HCT116 (cell line): ENCODE measurements at regions of chr4 and their contacts with region 1.

Region 1: GRCh38 chr4:55444827-55445226 is 49.1 kb downstream of the TMEM165 start:
- DNase-seq: peak; percentile 13
- ATAC-seq: peak; percentile 52; the same call in 1 of the 2 replicates
- H3K4me3 ChIP-seq: no peak overlapping the region
- H3K27ac ChIP-seq: no peak overlapping the region
- H3K4me1 ChIP-seq: 0 out of 4 replicates have a peak, but pooled peaks cover 0 to 2% of the 10 kb centered on the region in 2 experiments
- H3K27me3 ChIP-seq: no peaks in the 10 kb centered on the region
- CTCF ChIP-seq: peak in 2 of 3 experiments; percentile 41 to 47; a peak in 3 of 6 replicates
- POLR2A ChIP-seq: no peak
- RAD21 ChIP-seq: peak; percentile 77

Region 2: GRCh38 chr4:55635741-55636655 is 191.2 kb after region 1 on chr4 and contains the start of gene NMU:
- CTCF ChIA-PET with region 1: no interaction called
- POLR2A ChIA-PET with region 1: no interaction called
- RAD21 ChIA-PET with region 1: no interaction called
- intact Hi-C with region 1: loop called (anchors 5 kb)
- DNase-seq: peak; percentile 67
- ATAC-seq: peak; percentile 93
- H3K4me3 ChIP-seq: peak within 1 kb of the TSS; percentile 77 to 78
- H3K27ac ChIP-seq: peak within 1 kb of the TSS; percentile 58
- H3K4me1 ChIP-seq: peaks cover 22 to 34% of the 10 kb centered on the region in 2 experiments
- H3K27me3 ChIP-seq: no peaks in the 10 kb centered on the region
- CTCF ChIP-seq: 0 out of 6 replicates have a peak, but pooled peaks of 1 of the 3 experiments have one; percentile 6
- POLR2A ChIP-seq: peak; percentile 73
- RAD21 ChIP-seq: peak; percentile 64
- total RNA-seq, gene NMU: 81.1 TPM

Region 3: GRCh38 chr4:55736605-55737183 is 291.9 kb after region 1 on chr4:
- CTCF ChIA-PET with region 1: interaction called, 7 read pairs
- POLR2A ChIA-PET with region 1: no interaction called
- RAD21 ChIA-PET with region 1: no interaction called
- intact Hi-C with region 1: loop called (anchors 1 kb)
- DNase-seq: peak; percentile 23
- ATAC-seq: no peak
- H3K4me3 ChIP-seq: no peak overlapping the region
- H3K27ac ChIP-seq: no peak overlapping the region
- H3K4me1 ChIP-seq: peaks cover 5 to 18% of the 10 kb centered on the region in 2 experiments
- H3K27me3 ChIP-seq: no peaks in the 10 kb centered on the region
- CTCF ChIP-seq: peak; percentile 23 to 58 (median 54); a peak in 4 of 6 replicates
- POLR2A ChIP-seq: no peak
- RAD21 ChIP-seq: peak; percentile 79

Region 4: DNA sequence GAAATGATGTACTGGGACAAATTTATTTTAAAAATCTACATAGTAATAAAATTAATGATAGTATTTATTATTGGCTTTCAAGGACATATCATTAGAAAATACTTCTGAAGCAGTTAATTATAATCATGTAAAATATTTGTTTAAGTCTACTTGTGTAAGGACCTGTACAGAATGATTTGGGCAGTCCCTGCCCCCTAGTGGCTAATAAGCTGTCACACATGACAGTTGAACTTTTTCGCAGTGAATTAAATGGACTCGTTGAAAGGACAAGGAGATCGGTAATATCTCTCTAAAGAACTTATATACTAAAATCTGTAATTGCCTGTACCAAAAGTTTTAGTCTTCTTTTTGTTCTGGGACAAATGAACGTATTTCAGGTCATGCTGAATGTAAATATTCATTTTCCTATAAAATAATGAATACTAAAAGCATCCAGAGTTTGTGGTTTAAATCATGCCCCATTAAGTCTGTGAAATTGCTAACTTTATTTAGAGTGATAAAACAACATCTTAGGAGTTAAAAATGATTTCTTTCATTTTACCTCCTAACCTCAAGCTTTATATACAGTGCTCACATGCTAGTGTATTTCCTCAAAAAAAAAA is 422.2 kb after region 1 on chr4:
- CTCF ChIA-PET with region 1: interaction called, 4 read pairs
- POLR2A ChIA-PET with region 1: no interaction called
- RAD21 ChIA-PET with region 1: no interaction called
- intact Hi-C with region 1: loop called (anchors 10 kb)
- DNase-seq: peak; percentile 51
- ATAC-seq: peak; percentile 87
- H3K4me3 ChIP-seq: no peak overlapping the region
- H3K27ac ChIP-seq: peak overlapping the region; percentile 49; the same call in 1 of the 2 replicates
- H3K4me1 ChIP-seq: peaks cover 12 to 26% of the 10 kb centered on the region in 2 experiments
- H3K27me3 ChIP-seq: no peaks in the 10 kb centered on the region
- CTCF ChIP-seq: peak; percentile 33 to 79 (median 78); a peak in 5 of 6 replicates
- POLR2A ChIP-seq: no peak
- RAD21 ChIP-seq: peak; percentile 76